Left lung (tissue), 14 donors: ENCODE measurements at regions of chr1 and their contacts with region 1.

Region 1: GRCh38 chr1:27392096-27392777 is at the start of gene GPR3:
- DNase-seq: peak; percentile 61 to 94 (median 88)
- ATAC-seq: peak; percentile 91
- H3K4me3 ChIP-seq: peak within 1 kb of the TSS; percentile 32 to 50
- H3K27ac ChIP-seq: peak within 1 kb of the TSS; percentile 7 to 41
- H3K4me1 ChIP-seq: peaks cover 9 to 32% of the 10 kb centered on the region in 2 donors
- H3K27me3 ChIP-seq: peaks cover 0 to 15% of the 10 kb centered on the region in 2 donors
- CTCF ChIP-seq: no peak
- polyA plus RNA-seq, gene GPR3: 0.58 to 1.7 (median 1.2) TPM

Region 2: DNA sequence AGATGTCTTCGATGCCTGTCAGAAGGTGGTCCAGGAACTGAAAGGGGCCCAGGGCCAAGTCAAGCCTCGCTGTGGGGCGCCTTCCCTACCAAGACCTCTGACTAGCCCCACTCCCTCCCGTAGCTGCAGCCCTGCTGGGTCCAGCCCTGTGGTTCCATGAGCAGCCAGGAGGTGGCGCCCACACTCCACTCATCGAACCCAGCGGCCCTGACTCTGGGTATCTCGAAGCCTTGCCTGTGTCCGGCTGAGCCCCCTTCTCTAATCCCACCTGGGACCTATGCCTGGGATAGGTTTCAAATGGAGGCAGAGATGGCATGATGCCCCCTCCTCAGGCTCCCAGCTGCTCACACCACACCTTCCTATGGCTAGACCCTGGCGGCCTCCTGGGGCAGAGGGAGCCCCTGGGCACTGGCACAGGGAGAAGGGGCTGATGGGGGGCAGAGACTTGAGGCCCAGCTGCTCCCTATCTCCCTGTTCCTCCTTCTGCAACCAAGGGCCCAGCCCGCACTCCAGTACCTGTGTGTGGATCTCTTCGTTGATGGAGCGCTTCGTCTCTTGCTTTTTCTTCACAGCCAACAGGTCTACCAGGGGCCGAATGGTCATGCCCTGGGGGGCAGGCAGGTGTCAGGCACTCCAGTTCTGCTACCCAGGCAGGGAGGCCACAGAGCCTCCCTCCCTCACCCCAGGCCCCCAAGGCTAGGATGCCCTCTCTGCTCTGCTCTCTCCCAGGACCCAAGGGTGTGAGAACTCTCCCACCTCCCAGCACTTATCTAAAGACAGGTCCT is 289.3 kb before region 1 on chr1:
- intact Hi-C with region 1: loop called in 1 of 2 experiments (anchors 10 kb)
- DNase-seq: peak; percentile 59 to 94 (median 76)
- ATAC-seq: peak; percentile 51
- H3K4me3 ChIP-seq: no peak overlapping the region
- H3K27ac ChIP-seq: no peak overlapping the region
- H3K4me1 ChIP-seq: peaks cover 20 to 25% of the 10 kb centered on the region in 2 donors
- H3K27me3 ChIP-seq: no peaks in the 10 kb centered on the region
- CTCF ChIP-seq: peak; percentile 95 to 99

Region 3: GRCh38 chr1:27300341-27301051 is 91.7 kb before region 1 on chr1:
- intact Hi-C with region 1: loop called (anchors 5 to 10 kb)
- DNase-seq: peak; percentile 84 to 97 (median 94)
- ATAC-seq: peak; percentile 94
- H3K4me3 ChIP-seq: no peak overlapping the region
- H3K27ac ChIP-seq: peak overlapping the region; percentile 60 to 68
- H3K4me1 ChIP-seq: peaks cover 19 to 21% of the 10 kb centered on the region in 2 donors
- H3K27me3 ChIP-seq: no peaks in the 10 kb centered on the region
- CTCF ChIP-seq: peak; percentile 97 to 100

Region 4: DNA sequence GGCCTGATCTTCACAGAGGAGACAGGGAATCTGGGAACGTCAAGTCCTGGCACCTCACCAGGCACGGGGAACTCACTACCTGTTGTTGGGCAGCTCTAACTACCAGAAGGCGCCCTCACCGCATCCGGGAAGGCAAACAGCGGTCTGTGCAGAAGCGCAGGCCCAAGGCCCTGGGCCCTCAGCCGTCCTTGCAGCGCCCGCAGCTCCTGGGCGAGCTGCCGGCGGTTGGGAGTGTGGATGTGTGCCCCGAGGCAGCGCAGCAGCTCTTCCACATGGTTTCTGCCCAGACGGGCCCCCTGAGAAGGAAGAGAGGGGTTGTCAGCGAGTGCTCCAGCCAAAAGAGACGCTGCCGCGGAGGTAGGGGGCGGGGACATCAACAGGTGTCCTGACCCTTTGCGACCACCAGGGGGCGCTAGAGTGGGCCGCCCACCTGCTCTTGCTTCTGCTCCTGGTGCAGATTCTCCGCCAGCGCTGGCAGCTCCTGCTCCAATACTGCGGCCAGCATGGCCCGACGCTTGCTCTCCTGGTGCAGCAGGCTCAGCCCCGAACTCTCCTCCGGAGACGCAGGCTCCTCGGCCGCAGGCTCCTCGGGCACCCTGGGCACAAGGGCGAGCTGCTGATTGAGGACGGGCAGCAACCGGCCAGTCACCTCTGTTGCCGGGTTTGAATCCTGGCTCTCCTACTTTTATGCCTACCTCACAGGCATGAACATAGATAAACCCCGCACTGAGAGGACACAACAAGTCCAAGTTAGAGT is 34.8 kb before region 1 on chr1:
- intact Hi-C with region 1: loop called in 1 of 2 experiments (anchors 5 kb)
- DNase-seq: peak in 3 of 4 donors; percentile 75 to 95 (median 78)
- ATAC-seq: peak; percentile 82
- H3K4me3 ChIP-seq: no peak overlapping the region
- H3K27ac ChIP-seq: peak overlapping the region in 1 of 2 donors; percentile 45
- H3K4me1 ChIP-seq: peaks cover 0 to 31% of the 10 kb centered on the region in 2 donors
- H3K27me3 ChIP-seq: no peaks in the 10 kb centered on the region
- CTCF ChIP-seq: peak; percentile 98 to 99

Region 5: GRCh38 chr1:27682351-27682944 is 290.2 kb after region 1 on chr1:
- intact Hi-C with region 1: no loop called
- DNase-seq: no peak
- ATAC-seq: no peak
- H3K4me3 ChIP-seq: no peak overlapping the region
- H3K27ac ChIP-seq: no peak overlapping the region
- H3K4me1 ChIP-seq: no peaks in the 10 kb centered on the region
- H3K27me3 ChIP-seq: no peaks in the 10 kb centered on the region
- CTCF ChIP-seq: no peak